ENCODE measurements at regions of chr13 and their contacts with region 1.

Region 1: GRCh38 chr13:76822698-76823267 is 63.4 kb downstream of the KCTD12 start:
- DNase-seq: no peak
- ATAC-seq: peak in 6 of 8 donors; percentile 30 to 71 (median 53)
- H3K4me3 ChIP-seq: no peak overlapping the region
- H3K27ac ChIP-seq: peak overlapping the region in 2 of 10 donors; percentile 21 to 52
- H3K4me1 ChIP-seq: peaks cover 0 to 22% (median 0%) of the 10 kb centered on the region in 9 donors
- H3K27me3 ChIP-seq: no peaks in the 10 kb centered on the region
- CTCF ChIP-seq: peak in 7 of 9 donors; percentile 18 to 56 (median 42)

Region 2: DNA sequence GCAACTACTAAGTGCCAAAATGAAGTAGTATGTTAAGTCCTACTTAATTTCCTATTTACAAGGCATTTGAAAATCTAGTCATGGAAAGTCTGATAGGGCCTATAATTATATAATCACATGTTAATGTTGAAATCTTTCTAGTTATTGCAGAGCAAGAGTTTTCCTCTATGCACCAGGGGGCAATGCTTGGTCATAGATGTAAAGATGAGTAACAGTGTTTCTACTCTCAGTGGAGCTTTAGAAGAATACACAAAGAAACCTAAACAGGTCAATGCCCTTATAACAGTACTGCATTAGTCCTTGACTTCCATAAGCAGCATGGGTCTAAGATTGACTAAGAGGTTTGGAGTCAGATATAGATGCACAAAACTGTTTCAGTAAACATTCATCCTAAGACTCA is 155.2 kb before region 1 on chr13:
- intact Hi-C with region 1: loop called in 3 of 10 experiments (anchors 5 to 10 kb)
- DNase-seq: peak in 1 of 2 donors; percentile 32
- ATAC-seq: peak in 7 of 8 donors; percentile 62 to 83 (median 72)
- H3K4me3 ChIP-seq: no peak overlapping the region
- H3K27ac ChIP-seq: no peak overlapping the region
- H3K4me1 ChIP-seq: peaks cover 0 to 17% (median 0%) of the 10 kb centered on the region in 9 donors
- H3K27me3 ChIP-seq: no peaks in the 10 kb centered on the region
- CTCF ChIP-seq: peak in 8 of 9 donors; percentile 18 to 66 (median 52)

Region 3: GRCh38 chr13:76954538-76954937 is 131.8 kb after region 1 on chr13:
- intact Hi-C with region 1: no loop called
- DNase-seq: no peak
- ATAC-seq: no peak
- H3K4me3 ChIP-seq: no peak overlapping the region
- H3K27ac ChIP-seq: no peak overlapping the region
- H3K4me1 ChIP-seq: no peaks in the 10 kb centered on the region
- H3K27me3 ChIP-seq: peaks cover 0 to 26% (median 12%) of the 10 kb centered on the region in 7 donors
- CTCF ChIP-seq: no peak

Measured in heart right ventricle (tissue), 16 donors.